Panc1 (cell line): ENCODE measurements at regions of chr19 and their contacts with region 1.

Region 1: GRCh38 chr19:7202888-7203287 is 91.3 kb downstream of the INSR start:
- DNase-seq: no peak
- ATAC-seq: no peak
- H3K4me3 ChIP-seq: no peak overlapping the region
- H3K27ac ChIP-seq: no peak overlapping the region
- H3K4me1 ChIP-seq: no peaks in the 10 kb centered on the region; the same call in 1 of the 2 replicates
- H3K27me3 ChIP-seq: no peaks in the 10 kb centered on the region; the same call in none of the 2 replicates
- CTCF ChIP-seq: no peak

Region 2: GRCh38 chr19:7168941-7169340 is 33.9 kb before region 1 on chr19:
- CTCF ChIA-PET with region 1: interaction called, 11 read pairs
- POLR2A ChIA-PET with region 1: no interaction called
- in situ Hi-C with region 1: no loop called
- intact Hi-C with region 1: no loop called
- DNase-seq: no peak
- ATAC-seq: no peak
- H3K4me3 ChIP-seq: no peak overlapping the region
- H3K27ac ChIP-seq: no peak overlapping the region
- H3K4me1 ChIP-seq: no peaks in the 10 kb centered on the region
- H3K27me3 ChIP-seq: no peaks in the 10 kb centered on the region
- CTCF ChIP-seq: no peak

Region 3: DNA sequence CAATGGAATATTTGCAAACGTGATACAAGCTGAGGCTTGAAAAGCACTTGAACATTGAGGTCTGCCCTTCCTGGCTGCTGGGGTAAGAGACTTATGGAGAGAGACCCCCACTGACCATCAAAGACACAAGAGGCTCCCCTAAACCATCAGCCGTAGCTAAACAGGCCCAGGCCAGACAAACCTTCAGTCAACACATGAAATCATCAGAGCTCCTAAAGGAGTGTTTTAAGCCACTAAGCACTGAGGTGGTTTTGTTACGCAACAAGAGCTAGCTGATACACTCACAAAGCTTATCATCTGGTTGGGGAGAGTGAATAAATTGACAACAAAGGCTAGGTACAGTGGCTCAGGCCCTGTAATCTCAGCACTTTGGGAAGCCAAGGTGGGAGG is 23.0 kb before region 1 on chr19:
- CTCF ChIA-PET with region 1: interaction called, 10 read pairs
- POLR2A ChIA-PET with region 1: no interaction called
- in situ Hi-C with region 1: no loop called
- intact Hi-C with region 1: no loop called
- DNase-seq: no peak
- ATAC-seq: no peak
- H3K4me3 ChIP-seq: no peak overlapping the region
- H3K27ac ChIP-seq: no peak overlapping the region
- H3K4me1 ChIP-seq: no peaks in the 10 kb centered on the region
- H3K27me3 ChIP-seq: no peaks in the 10 kb centered on the region
- CTCF ChIP-seq: no peak

Region 4: DNA sequence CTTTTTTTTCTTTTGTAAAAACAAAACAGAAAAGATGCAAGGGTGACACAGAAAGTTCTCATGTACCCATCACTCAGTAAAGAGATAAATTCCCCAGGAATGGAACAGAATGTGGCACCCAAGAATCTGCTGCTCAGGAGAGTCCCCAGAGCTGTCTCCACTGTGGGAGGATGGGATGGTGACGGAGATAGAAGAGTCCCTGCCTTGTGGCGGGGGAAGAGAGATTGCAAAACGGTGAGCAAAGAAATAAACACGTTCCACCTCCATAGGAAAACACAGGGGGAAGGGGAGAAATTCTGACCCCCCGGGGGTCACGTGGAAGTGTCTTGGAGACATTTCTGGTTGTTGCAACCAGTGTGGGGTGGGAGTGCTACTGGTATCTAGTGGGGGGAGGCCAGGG is 15.0 kb after region 1 on chr19:
- CTCF ChIA-PET with region 1: no interaction called
- POLR2A ChIA-PET with region 1: interaction called, 11 read pairs
- in situ Hi-C with region 1: no loop called
- intact Hi-C with region 1: no loop called
- DNase-seq: no peak
- ATAC-seq: no peak
- H3K4me3 ChIP-seq: no peak overlapping the region
- H3K27ac ChIP-seq: no peak overlapping the region
- H3K4me1 ChIP-seq: no peaks in the 10 kb centered on the region
- H3K27me3 ChIP-seq: no peaks in the 10 kb centered on the region
- CTCF ChIP-seq: no peak